ENCODE measurements at regions of chr1 and their contacts with region 1.

Region 1: DNA sequence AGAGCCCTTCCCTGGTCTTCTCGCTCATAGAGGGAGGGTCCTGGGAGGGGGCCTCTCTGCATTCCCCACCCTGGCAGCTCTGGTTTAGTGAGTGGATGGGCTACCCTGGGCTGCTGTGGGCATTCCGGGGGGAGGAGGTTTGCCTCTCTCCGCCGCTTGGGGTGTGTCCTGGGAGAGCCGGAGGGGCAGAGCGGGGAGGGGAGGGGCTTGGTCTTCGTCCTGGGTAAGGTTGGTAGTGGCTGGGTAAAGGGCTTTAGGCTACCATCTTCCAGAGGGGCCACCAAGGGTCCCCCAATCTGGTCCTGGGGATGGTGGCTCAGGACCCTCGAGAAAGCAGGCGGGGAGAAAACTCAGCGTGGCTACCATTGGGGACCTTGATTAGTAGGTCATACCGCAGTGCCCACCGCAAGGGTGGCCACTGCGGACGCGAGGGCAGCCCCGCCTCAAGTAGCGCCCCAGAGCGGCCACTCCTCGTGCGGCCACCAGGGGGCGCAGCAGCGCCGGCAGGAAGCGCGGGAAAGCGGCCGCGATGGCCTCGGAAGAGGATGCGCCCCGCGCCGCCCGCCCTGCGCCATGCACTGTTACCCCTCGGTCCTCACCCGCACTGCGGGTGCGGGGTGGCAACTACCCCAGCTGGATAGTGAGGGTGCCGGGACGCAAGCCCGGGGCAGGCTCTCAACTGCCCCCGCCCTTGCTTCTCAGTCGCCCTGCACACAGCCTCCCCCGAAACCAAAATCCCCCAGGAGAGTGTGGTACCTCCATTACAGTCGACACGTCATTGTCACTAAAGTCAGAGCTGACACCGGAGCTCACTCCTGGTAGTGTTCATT is 44.1 kb upstream of the SLC25A33 start:
- DNase-seq: peak; percentile 67
- ATAC-seq: peak; percentile 78
- H3K4me3 ChIP-seq: peak overlapping the region; percentile 26; the same call in 1 of the 2 replicates
- H3K27ac ChIP-seq: no peak overlapping the region
- H3K4me1 ChIP-seq: peaks cover 8% of the 10 kb centered on the region; the same call in 1 of the 2 replicates
- H3K27me3 ChIP-seq: no peaks in the 10 kb centered on the region
- CTCF ChIP-seq: peak; percentile 92

Region 2: GRCh38 chr1:9267352-9267686 is 227.8 kb before region 1 on chr1:
- CTCF ChIA-PET with region 1: interaction called, 11 read pairs
- POLR2A ChIA-PET with region 1: no interaction called
- intact Hi-C with region 1: loop called (anchors 1 kb)
- DNase-seq: no peak
- ATAC-seq: no peak
- H3K4me3 ChIP-seq: no peak overlapping the region
- H3K27ac ChIP-seq: no peak overlapping the region
- H3K4me1 ChIP-seq: peaks cover 24% of the 10 kb centered on the region
- H3K27me3 ChIP-seq: no peaks in the 10 kb centered on the region
- CTCF ChIP-seq: 0 out of 2 replicates have a peak, but pooled peaks have one; percentile 5

Region 3: DNA sequence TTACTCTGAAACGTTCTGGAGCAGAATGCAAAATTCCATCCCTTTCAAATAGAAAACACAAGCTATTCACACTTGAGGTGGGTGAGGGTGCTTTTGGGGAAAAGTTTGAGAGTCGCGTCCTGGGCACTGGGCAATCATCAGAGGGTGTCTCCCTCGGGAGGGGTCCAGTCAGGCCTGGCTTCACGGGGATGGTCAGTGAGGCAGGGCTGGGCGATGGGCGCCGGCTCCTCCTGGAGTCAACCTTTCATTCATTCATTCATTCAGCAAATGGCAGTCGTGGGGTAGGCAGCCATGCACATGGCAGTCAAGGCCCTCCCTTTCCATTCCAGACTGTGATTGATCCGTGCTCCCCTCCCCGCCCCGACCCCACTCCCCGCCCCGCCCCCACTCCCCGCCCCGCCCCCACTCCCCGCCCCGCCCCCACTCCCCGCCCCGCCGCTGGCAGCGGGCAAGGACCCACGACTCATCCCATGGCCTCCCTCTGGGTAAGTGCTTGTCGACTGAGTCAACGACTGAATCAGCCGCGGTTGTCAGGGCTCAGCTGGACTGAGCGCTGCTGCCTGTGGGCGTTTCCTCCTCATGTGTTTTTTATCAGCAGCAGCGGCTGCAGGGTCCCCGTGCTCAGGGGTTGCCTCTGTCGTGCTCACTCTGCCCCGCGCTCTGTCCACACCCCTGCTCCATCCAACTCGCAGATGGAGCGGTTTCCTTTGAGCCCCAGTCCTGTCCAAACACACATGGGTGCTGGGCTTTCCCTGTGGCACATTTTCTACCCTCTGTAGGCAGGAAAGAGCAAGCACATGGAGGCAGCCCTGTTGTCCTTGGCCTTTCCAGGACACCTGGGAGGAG is 214.9 kb before region 1 on chr1:
- CTCF ChIA-PET with region 1: no interaction called
- POLR2A ChIA-PET with region 1: no interaction called
- intact Hi-C with region 1: no loop called
- DNase-seq: peak; percentile 91
- ATAC-seq: peak; percentile 94
- H3K4me3 ChIP-seq: peak overlapping the region; percentile 59
- H3K27ac ChIP-seq: peak overlapping the region; percentile 80
- H3K4me1 ChIP-seq: peaks cover 45% of the 10 kb centered on the region
- H3K27me3 ChIP-seq: no peaks in the 10 kb centered on the region
- CTCF ChIP-seq: no peak

Region 4: GRCh38 chr1:9573723-9574122 is 78.6 kb after region 1 on chr1:
- CTCF ChIA-PET with region 1: no interaction called
- POLR2A ChIA-PET with region 1: no interaction called
- intact Hi-C with region 1: loop called (anchors 1 kb)
- DNase-seq: peak; percentile 35
- ATAC-seq: no peak
- H3K4me3 ChIP-seq: no peak overlapping the region
- H3K27ac ChIP-seq: no peak overlapping the region
- H3K4me1 ChIP-seq: no peaks in the 10 kb centered on the region
- H3K27me3 ChIP-seq: no peaks in the 10 kb centered on the region
- CTCF ChIP-seq: peak; percentile 61

Measured in PC-3 (cell line).